ENCODE measurements at regions of chr17 and their contacts with region 1.

Region 1: GRCh38 chr17:27805520-27806146 is 5.3 kb upstream of the NOS2 start:
- DNase-seq: peak; percentile 98
- H3K4me3 ChIP-seq: peak overlapping the region; percentile 39 to 55 (median 44)
- H3K27ac ChIP-seq: peak overlapping the region in 3 of 4 donors; percentile 19 to 32 (median 28)
- H3K4me1 ChIP-seq: peaks cover 3 to 10% (median 9%) of the 10 kb centered on the region in 4 donors
- H3K27me3 ChIP-seq: no peaks in the 10 kb centered on the region
- CTCF ChIP-seq: peak; percentile 75 to 89 (median 85)
- EP300 ChIP-seq: no peak
- POLR2A ChIP-seq: no peak

Region 2: GRCh38 chr17:27540318-27541101 is 265.1 kb before region 1 on chr17:
- intact Hi-C with region 1: no loop called
- DNase-seq: peak; percentile 93
- H3K4me3 ChIP-seq: no peak overlapping the region
- H3K27ac ChIP-seq: peak overlapping the region; percentile 48 to 74 (median 72)
- H3K4me1 ChIP-seq: peaks cover 21 to 48% (median 34%) of the 10 kb centered on the region in 4 donors
- H3K27me3 ChIP-seq: no peaks in the 10 kb centered on the region
- CTCF ChIP-seq: no peak
- EP300 ChIP-seq: no peak
- POLR2A ChIP-seq: no peak

Region 3: GRCh38 chr17:27879987-27880608 is 74.5 kb after region 1 on chr17:
- intact Hi-C with region 1: loop called (anchors 5 kb)
- DNase-seq: no peak
- H3K4me3 ChIP-seq: no peak overlapping the region
- H3K27ac ChIP-seq: no peak overlapping the region
- H3K4me1 ChIP-seq: no peaks in the 10 kb centered on the region
- H3K27me3 ChIP-seq: no peaks in the 10 kb centered on the region
- CTCF ChIP-seq: peak; percentile 57 to 74 (median 68)
- EP300 ChIP-seq: no peak
- POLR2A ChIP-seq: no peak

Region 4: GRCh38 chr17:27892866-27893769 is 87.5 kb after region 1 on chr17 and contains the start of gene LYRM9:
- intact Hi-C with region 1: loop called (anchors 5 kb)
- DNase-seq: peak; percentile 93
- H3K4me3 ChIP-seq: peak within 1 kb of the TSS; percentile 69 to 89 (median 80)
- H3K27ac ChIP-seq: peak within 1 kb of the TSS; percentile 84 to 89 (median 86)
- H3K4me1 ChIP-seq: peaks cover 3 to 34% (median 27%) of the 10 kb centered on the region in 4 donors
- H3K27me3 ChIP-seq: peaks cover 0 to 12% (median 0%) of the 10 kb centered on the region in 4 donors
- CTCF ChIP-seq: peak; percentile 84 to 98 (median 87)
- EP300 ChIP-seq: no peak
- POLR2A ChIP-seq: no peak
- total RNA-seq, gene LYRM9: 5.0 to 21.6 (median 16.7) TPM

Region 5: GRCh38 chr17:28252436-28252835 is 446.8 kb after region 1 on chr17:
- intact Hi-C with region 1: loop called (anchors 10 kb)
- DNase-seq: no peak
- H3K4me3 ChIP-seq: no peak overlapping the region
- H3K27ac ChIP-seq: no peak overlapping the region
- H3K4me1 ChIP-seq: peaks cover 10 to 13% (median 11%) of the 10 kb centered on the region in 4 donors
- H3K27me3 ChIP-seq: peaks cover 0 to 67% (median 22%) of the 10 kb centered on the region in 4 donors
- CTCF ChIP-seq: no peak
- EP300 ChIP-seq: no peak
- POLR2A ChIP-seq: no peak

Measured in esophagus muscularis mucosa (tissue), 4 donors.